ENCODE measurements at regions of chr15 and their contacts with region 1.

Region 1: GRCh38 chr15:82139823-82140268 is 94.0 kb upstream of the MEX3B start:
- DNase-seq: no peak
- H3K4me3 ChIP-seq: no peak overlapping the region
- H3K27ac ChIP-seq: no peak overlapping the region
- H3K4me1 ChIP-seq: no peaks in the 10 kb centered on the region
- H3K27me3 ChIP-seq: no peaks in the 10 kb centered on the region
- CTCF ChIP-seq: peak; percentile 33 to 84 (median 62)
- POLR2A ChIP-seq: no peak

Region 2: DNA sequence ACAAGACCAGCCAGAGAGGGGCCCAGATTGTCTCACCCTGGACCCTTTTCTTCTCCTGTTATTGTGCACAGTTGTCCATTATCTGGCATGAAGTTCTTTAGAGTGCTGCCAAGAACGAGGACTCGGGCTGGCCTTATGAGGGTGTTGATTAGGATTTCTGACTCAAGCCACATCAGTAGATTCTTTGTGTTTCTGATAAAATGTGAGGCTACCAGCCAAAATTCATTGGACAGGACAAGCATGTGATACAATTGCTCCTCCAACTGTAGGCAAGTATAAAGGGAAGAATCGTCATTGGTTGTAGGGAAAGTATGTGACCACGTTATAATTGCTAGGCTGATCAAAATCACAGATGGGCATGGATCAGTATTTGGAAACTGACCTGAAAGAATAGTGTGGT is 666.7 kb before region 1 on chr15:
- intact Hi-C with region 1: loop called (anchors 10 kb)
- DNase-seq: no peak
- H3K4me3 ChIP-seq: no peak overlapping the region
- H3K27ac ChIP-seq: no peak overlapping the region
- H3K4me1 ChIP-seq: no peaks in the 10 kb centered on the region
- H3K27me3 ChIP-seq: no peaks in the 10 kb centered on the region
- CTCF ChIP-seq: no peak
- POLR2A ChIP-seq: no peak

Region 3: DNA sequence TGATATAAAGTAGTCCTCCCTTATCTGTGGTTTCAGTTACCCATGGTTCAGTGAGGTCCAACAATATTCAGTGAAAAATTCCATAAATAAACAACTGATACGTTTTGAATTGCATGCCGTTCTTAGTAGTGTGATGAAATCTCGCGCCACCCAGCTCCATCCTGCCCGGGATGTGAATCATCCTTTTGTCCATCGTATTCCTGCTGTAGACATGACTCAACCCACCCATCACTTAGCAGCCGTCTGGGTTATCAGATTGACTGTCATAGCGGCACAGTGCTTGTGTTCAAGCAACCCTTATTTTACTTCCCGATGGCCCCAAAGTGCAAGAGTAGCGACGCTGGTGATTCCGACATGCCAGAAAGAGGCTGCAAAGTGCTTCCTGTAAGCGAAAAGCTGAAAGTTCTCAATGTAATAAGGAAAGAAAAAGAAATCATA is 46.1 kb before region 1 on chr15:
- intact Hi-C with region 1: no loop called
- DNase-seq: no peak
- H3K4me3 ChIP-seq: no peak overlapping the region
- H3K27ac ChIP-seq: no peak overlapping the region
- H3K4me1 ChIP-seq: no peaks in the 10 kb centered on the region
- H3K27me3 ChIP-seq: no peaks in the 10 kb centered on the region
- CTCF ChIP-seq: no peak
- POLR2A ChIP-seq: no peak